HAP-1 (cell line): ENCODE measurements at regions of chr15 and their contacts with region 1.

Region 1: DNA sequence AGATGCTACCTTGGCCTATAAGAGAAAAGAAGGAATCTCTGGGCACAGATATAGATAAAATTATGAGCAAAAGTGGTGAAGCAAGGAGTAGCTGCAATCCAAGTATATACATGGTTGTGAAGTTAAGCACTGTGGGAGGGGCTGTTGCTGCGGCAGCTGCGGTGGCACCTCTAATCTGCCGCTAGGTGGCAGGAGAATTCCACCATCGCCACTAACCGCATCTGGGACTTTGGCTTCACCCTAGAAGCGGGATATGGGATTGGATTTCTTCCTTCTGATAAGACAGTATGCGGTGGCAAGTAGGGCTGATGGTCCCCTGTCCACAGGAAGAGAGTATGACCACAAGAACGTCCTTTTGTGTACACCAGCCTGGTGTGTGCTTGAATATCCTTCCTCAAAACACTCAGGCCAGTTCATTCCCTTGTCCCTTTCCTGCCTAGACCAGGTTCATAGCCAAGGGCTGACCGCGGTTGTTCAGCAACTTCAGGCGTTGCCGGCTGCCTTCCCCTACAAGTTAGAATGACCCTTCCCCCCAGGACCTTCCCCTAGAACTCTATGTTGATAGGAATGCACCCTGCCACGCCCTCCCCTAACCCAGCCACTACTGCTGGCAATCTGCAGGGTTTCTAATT is 5.1 kb downstream of the MAGEL2 start:
- DNase-seq: peak; percentile 47 to 65
- H3K4me3 ChIP-seq: no peak overlapping the region
- H3K4me1 ChIP-seq: no peaks in the 10 kb centered on the region
- H3K27me3 ChIP-seq: no peaks in the 10 kb centered on the region

Region 2: GRCh38 chr15:23606226-23606625 is 36.3 kb before region 1 on chr15:
- in situ Hi-C with region 1: no loop called
- DNase-seq: no peak
- H3K4me3 ChIP-seq: no peak overlapping the region
- H3K4me1 ChIP-seq: no peaks in the 10 kb centered on the region
- H3K27me3 ChIP-seq: no peaks in the 10 kb centered on the region

Region 3: DNA sequence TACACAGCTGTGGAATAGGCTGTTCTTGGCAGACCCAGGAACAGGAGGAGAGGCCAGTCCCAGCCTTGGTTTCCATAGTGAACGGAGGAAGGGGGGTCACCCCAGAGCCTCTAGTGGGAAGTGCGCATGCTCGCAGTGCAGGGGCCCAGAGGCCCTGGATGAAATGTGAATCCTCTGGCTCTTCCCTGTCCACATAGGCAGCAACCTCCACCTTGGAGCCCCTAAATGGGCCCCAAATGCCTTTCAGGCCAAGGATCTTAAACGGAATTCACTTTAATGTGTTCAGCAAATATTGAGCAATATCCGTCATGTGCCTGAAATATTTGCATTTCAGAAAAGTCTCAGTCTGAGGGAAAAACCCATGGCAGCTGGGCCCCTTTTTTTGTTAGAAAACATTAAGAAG is 47.9 kb after region 1 on chr15:
- in situ Hi-C with region 1: no loop called
- DNase-seq: no peak
- H3K4me3 ChIP-seq: no peak overlapping the region
- H3K4me1 ChIP-seq: no peaks in the 10 kb centered on the region
- H3K27me3 ChIP-seq: no peaks in the 10 kb centered on the region

Region 4: GRCh38 chr15:23708332-23708731 is 65.8 kb after region 1 on chr15:
- in situ Hi-C with region 1: no loop called
- DNase-seq: no peak
- H3K4me3 ChIP-seq: no peak overlapping the region
- H3K4me1 ChIP-seq: no peaks in the 10 kb centered on the region
- H3K27me3 ChIP-seq: no peaks in the 10 kb centered on the region

Region 5: GRCh38 chr15:25208735-25209134 is 1566.2 kb after region 1 on chr15:
- in situ Hi-C with region 1: loop called (anchors 25 kb)
- DNase-seq: no peak
- H3K4me3 ChIP-seq: no peak overlapping the region
- H3K4me1 ChIP-seq: no peaks in the 10 kb centered on the region
- H3K27me3 ChIP-seq: no peaks in the 10 kb centered on the region

Region 6: DNA sequence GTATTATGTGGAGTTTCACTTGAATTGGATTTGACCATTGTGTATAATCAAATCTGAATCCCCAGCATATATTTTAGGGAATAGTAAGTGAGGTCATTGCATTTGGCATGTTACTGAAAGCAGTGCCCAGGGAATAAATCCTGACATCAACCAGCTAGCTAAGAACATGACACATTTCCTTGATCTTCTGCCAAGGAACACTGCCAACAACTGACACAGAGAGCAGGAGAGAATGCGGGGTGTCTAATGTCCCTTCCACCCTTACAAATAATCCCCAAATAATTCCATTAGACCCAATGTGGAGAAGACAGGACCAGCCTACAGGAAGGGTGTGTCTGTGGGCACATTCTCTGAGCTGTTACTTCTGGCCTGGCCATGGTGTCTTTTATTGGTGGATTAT is 1826.8 kb after region 1 on chr15:
- in situ Hi-C with region 1: loop called (anchors 25 kb)
- DNase-seq: no peak
- H3K4me3 ChIP-seq: no peak overlapping the region
- H3K4me1 ChIP-seq: no peaks in the 10 kb centered on the region
- H3K27me3 ChIP-seq: peaks cover 2% of the 10 kb centered on the region; the same call in 1 of the 2 replicates